ENCODE measurements at regions of chr20 and their contacts with region 1.

Region 1: GRCh38 chr20:16350465-16350864 is 222.8 kb downstream of the KIF16B start:
- DNase-seq: peak; percentile 77 to 78
- ATAC-seq: peak; percentile 51 to 68
- H3K4me3 ChIP-seq: no peak overlapping the region
- H3K27ac ChIP-seq: peak overlapping the region; percentile 64 to 82 (median 78)
- H3K4me1 ChIP-seq: peaks cover 19 to 35% of the 10 kb centered on the region in 2 donors
- H3K27me3 ChIP-seq: no peaks in the 10 kb centered on the region
- CTCF ChIP-seq: no peak
- POLR2A ChIP-seq: no peak

Region 2: GRCh38 chr20:16283992-16284742 is 66.3 kb before region 1 on chr20:
- in situ Hi-C with region 1: no loop called
- intact Hi-C with region 1: loop called (anchors 2 kb)
- DNase-seq: peak; percentile 86 to 88
- ATAC-seq: peak; percentile 93 to 96
- H3K4me3 ChIP-seq: no peak overlapping the region
- H3K27ac ChIP-seq: peak overlapping the region; percentile 78 to 89 (median 84)
- H3K4me1 ChIP-seq: peaks cover 16 to 20% of the 10 kb centered on the region in 2 donors
- H3K27me3 ChIP-seq: no peaks in the 10 kb centered on the region
- CTCF ChIP-seq: no peak
- POLR2A ChIP-seq: no peak

Region 3: GRCh38 chr20:16368645-16369292 is 18.3 kb after region 1 on chr20:
- in situ Hi-C with region 1: no loop called
- intact Hi-C with region 1: loop called (anchors 1 kb)
- DNase-seq: peak; percentile 57 to 72
- ATAC-seq: peak; percentile 94 to 97
- H3K4me3 ChIP-seq: no peak overlapping the region
- H3K27ac ChIP-seq: peak overlapping the region; percentile 70 to 82 (median 74)
- H3K4me1 ChIP-seq: peaks cover 18 to 22% of the 10 kb centered on the region in 2 donors
- H3K27me3 ChIP-seq: no peaks in the 10 kb centered on the region
- CTCF ChIP-seq: no peak
- POLR2A ChIP-seq: peak; percentile 27 to 38

Region 4: DNA sequence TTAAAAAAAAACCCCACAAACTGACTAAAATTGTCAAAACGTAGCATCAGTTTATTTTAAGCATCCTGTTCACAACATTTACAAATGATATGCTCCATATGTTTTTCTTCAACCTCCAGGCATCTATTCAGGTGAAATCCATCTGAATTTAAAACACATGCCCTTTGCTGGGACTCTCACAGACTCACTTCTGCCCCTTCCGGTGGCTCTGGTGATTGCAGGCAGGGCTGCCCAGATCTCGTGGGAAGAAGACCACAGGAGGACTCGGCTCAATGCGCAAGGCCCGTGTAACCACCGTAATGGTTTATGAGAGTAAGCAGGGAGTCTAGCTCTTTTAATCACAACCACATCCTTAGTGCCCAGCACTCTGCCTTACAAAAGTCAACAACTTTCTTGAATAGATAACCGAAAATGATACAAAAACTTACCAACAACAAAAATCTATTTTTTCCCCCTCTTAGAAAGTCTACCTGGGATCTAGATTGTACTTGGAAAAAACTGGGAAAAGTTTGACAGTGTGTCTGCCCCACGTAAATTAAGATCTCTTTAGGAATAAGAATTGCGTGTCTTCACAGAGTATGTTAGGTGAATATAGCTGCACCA is 83.7 kb after region 1 on chr20:
- in situ Hi-C with region 1: no loop called
- intact Hi-C with region 1: loop called (anchors 10 kb)
- DNase-seq: peak in 1 of 2 donors; percentile 26
- ATAC-seq: no peak
- H3K4me3 ChIP-seq: no peak overlapping the region
- H3K27ac ChIP-seq: no peak overlapping the region
- H3K4me1 ChIP-seq: peaks cover 8 to 17% of the 10 kb centered on the region in 2 donors
- H3K27me3 ChIP-seq: no peaks in the 10 kb centered on the region
- CTCF ChIP-seq: peak in 4 of 5 experiments; percentile 25 to 60 (median 48)
- POLR2A ChIP-seq: no peak

Region 5: DNA sequence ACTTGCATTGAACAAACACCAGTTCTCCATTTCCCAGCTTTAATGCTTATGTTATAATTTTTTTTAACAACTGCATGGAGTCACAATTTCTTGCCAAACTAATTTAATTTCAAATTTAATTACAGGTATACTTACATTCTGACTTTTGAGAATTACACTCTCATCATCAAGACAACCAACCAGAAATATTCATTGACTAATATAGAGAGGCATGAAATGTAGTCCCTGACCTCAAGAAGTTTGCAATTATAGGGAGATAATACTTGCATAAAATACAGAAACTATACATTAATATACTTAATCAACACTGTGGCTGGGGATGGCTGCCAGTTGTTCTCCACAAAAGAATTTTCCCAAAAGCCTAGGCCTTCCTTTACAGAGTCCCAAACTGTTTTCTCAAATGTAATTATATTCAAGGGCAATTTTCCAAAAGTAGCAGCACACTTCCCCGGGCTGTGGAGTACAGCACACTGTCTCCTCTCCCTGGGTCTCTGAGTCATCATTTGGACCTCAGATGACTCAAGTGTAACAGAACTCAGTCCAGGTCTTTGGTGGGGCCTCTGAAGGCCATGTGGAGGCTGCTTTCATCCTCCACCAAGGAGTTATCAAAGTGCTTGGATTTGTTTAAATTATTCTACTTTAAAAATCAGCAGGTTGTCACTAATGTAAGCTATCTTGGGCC is 108.7 kb after region 1 on chr20:
- in situ Hi-C with region 1: loop called in 1 of 4 experiments (anchors 25 kb)
- intact Hi-C with region 1: no loop called
- DNase-seq: peak; percentile 63 to 68
- ATAC-seq: peak; percentile 99 to 100
- H3K4me3 ChIP-seq: no peak overlapping the region
- H3K27ac ChIP-seq: peak overlapping the region in 3 of 4 donors; percentile 32 to 66 (median 51)
- H3K4me1 ChIP-seq: peaks cover 16 to 19% of the 10 kb centered on the region in 2 donors
- H3K27me3 ChIP-seq: no peaks in the 10 kb centered on the region
- CTCF ChIP-seq: no peak
- POLR2A ChIP-seq: no peak

Region 6: GRCh38 chr20:16476032-16476431 is 125.6 kb after region 1 on chr20:
- in situ Hi-C with region 1: loop called in 1 of 4 experiments (anchors 25 kb)
- intact Hi-C with region 1: loop called (anchors 1 kb)
- DNase-seq: peak in 1 of 2 donors; percentile 12
- ATAC-seq: peak; percentile 75 to 77
- H3K4me3 ChIP-seq: no peak overlapping the region
- H3K27ac ChIP-seq: peak overlapping the region in 3 of 4 donors; percentile 52 to 82 (median 71)
- H3K4me1 ChIP-seq: peaks cover 23% of the 10 kb centered on the region in 2 donors
- H3K27me3 ChIP-seq: no peaks in the 10 kb centered on the region
- CTCF ChIP-seq: peak; percentile 53 to 78 (median 63)
- POLR2A ChIP-seq: no peak

Region 7: DNA sequence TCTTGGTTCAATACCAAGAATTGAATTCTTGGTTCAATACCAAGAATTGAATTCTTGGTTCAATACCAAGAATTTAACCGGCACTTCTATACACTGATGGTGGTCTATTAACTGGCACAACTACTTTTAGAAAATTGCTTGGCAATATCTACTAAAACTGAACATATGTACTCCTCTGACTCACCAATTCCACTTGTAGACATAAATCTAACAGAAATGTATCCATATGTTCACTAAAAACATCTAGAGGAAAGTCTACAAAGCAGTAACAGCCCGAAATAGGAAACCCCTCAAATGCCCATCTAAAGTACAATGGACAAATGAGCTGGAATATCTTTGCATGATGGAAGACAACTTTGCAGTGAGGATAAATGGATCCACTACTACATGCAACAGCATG is 150.8 kb after region 1 on chr20:
- in situ Hi-C with region 1: no loop called
- intact Hi-C with region 1: no loop called
- DNase-seq: no peak
- ATAC-seq: no peak
- H3K4me3 ChIP-seq: no peak overlapping the region
- H3K27ac ChIP-seq: no peak overlapping the region
- H3K4me1 ChIP-seq: no peaks in the 10 kb centered on the region
- H3K27me3 ChIP-seq: no peaks in the 10 kb centered on the region
- CTCF ChIP-seq: no peak
- POLR2A ChIP-seq: no peak